AG04450 (cell line): ENCODE measurements at regions of chr12 and their contacts with region 1.

Region 1: GRCh38 chr12:92608151-92609091 is 94.4 kb upstream of the PLEKHG7 start:
- DNase-seq: no peak
- H3K4me3 ChIP-seq: no peak overlapping the region
- H3K27ac ChIP-seq: no peak overlapping the region
- H3K27me3 ChIP-seq: no peaks in the 10 kb centered on the region
- CTCF ChIP-seq: peak; percentile 72

Region 2: DNA sequence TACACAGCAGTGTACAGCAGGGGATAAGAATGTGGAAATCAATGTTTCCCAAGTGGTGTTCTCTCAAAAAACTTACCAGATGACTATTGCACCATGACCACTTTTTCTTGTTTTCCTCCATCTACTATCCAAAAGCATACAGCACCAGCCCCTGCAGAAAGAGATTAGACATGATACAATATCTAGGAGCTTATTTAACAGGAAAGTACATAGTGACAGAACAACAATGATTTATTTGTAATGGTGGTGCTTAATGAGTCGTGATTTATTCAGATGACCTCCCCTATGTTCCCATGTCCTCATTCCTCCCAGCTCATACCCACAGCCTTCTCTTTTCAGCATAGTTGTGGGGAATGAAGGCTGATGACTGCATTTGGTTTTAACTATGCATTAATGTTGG is 876.3 kb before region 1 on chr12:
- CTCF ChIA-PET with region 1: interaction called, 10 read pairs
- POLR2A ChIA-PET with region 1: no interaction called
- DNase-seq: no peak
- H3K4me3 ChIP-seq: no peak overlapping the region
- H3K27ac ChIP-seq: no peak overlapping the region
- H3K27me3 ChIP-seq: no peaks in the 10 kb centered on the region
- CTCF ChIP-seq: no peak

Region 3: GRCh38 chr12:92290350-92290695 is 318.1 kb before region 1 on chr12:
- CTCF ChIA-PET with region 1: interaction called, 12 read pairs
- POLR2A ChIA-PET with region 1: no interaction called
- DNase-seq: no peak
- H3K4me3 ChIP-seq: no peak overlapping the region
- H3K27ac ChIP-seq: no peak overlapping the region
- H3K27me3 ChIP-seq: no peaks in the 10 kb centered on the region
- CTCF ChIP-seq: no peak

Region 4: DNA sequence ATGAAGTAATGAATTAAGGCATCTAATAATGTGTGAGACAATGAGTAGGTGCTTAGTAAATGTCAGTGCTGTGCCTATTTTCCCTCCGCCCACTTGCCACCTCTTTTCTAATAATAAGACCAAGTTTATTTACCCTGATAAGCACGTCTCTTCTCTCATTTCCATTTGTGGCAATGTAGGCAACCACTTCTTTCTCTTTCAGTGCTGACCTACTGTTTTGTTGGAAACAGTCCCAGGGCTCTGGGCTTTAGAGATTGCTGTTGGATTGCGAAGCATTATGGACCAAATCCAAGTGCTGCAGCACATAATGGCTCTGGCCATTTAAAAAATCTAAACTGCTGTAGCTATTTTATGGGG is 46.9 kb before region 1 on chr12:
- CTCF ChIA-PET with region 1: interaction called, 15 read pairs
- POLR2A ChIA-PET with region 1: no interaction called
- DNase-seq: peak; percentile 79
- H3K4me3 ChIP-seq: no peak overlapping the region
- H3K27ac ChIP-seq: no peak overlapping the region
- H3K27me3 ChIP-seq: no peaks in the 10 kb centered on the region
- CTCF ChIP-seq: no peak

Region 5: DNA sequence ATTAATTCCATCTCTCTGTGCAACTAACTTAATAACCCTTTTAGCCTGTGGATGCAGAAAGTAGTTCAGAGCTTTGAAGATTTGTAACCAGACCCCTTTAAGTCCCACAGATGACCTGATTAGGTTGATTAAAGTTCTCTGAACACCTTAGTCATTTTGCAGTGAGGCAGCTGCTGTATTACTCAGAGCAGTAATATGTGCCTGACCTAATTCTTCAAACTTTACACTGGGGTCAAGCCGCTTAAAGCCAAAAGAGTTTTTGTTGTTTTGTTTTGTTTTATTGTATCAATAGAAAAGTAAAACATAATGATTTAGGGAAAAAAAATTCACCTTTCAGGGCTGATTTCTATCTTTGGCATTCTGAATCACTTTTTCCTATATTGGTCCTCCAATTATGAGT is 15.8 kb after region 1 on chr12:
- CTCF ChIA-PET with region 1: interaction called, 10 read pairs
- POLR2A ChIA-PET with region 1: no interaction called
- DNase-seq: no peak
- H3K4me3 ChIP-seq: no peak overlapping the region
- H3K27ac ChIP-seq: no peak overlapping the region
- H3K27me3 ChIP-seq: no peaks in the 10 kb centered on the region
- CTCF ChIP-seq: no peak